Psoas muscle (tissue), 8 donors: ENCODE measurements at regions of chr2 and their contacts with region 1.

Region 1: GRCh38 chr2:70616168-70616694 is 62.6 kb upstream of the TGFA start:
- DNase-seq: no peak
- ATAC-seq: no peak
- H3K4me3 ChIP-seq: no peak overlapping the region
- H3K27ac ChIP-seq: no peak overlapping the region
- H3K4me1 ChIP-seq: no peaks in the 10 kb centered on the region
- H3K27me3 ChIP-seq: peaks cover 0 to 9% (median 0%) of the 10 kb centered on the region in 3 donors
- CTCF ChIP-seq: no peak

Region 2: GRCh38 chr2:70301344-70302194 is 314.7 kb before region 1 on chr2 and contains the start of gene FAM136A:
- intact Hi-C with region 1: loop called (anchors 1 to 5 kb)
- DNase-seq: peak; percentile 89 to 93
- ATAC-seq: peak; percentile 95 to 98 (median 98)
- H3K4me3 ChIP-seq: peak within 1 kb of the TSS; percentile 100
- H3K27ac ChIP-seq: peak within 1 kb of the TSS; percentile 88
- H3K4me1 ChIP-seq: peaks cover 7% of the 10 kb centered on the region
- H3K27me3 ChIP-seq: no peaks in the 10 kb centered on the region
- CTCF ChIP-seq: peak; percentile 96
- total RNA-seq, gene FAM136A: 14.1 to 28.0 (median 19.2) TPM

Region 3: DNA sequence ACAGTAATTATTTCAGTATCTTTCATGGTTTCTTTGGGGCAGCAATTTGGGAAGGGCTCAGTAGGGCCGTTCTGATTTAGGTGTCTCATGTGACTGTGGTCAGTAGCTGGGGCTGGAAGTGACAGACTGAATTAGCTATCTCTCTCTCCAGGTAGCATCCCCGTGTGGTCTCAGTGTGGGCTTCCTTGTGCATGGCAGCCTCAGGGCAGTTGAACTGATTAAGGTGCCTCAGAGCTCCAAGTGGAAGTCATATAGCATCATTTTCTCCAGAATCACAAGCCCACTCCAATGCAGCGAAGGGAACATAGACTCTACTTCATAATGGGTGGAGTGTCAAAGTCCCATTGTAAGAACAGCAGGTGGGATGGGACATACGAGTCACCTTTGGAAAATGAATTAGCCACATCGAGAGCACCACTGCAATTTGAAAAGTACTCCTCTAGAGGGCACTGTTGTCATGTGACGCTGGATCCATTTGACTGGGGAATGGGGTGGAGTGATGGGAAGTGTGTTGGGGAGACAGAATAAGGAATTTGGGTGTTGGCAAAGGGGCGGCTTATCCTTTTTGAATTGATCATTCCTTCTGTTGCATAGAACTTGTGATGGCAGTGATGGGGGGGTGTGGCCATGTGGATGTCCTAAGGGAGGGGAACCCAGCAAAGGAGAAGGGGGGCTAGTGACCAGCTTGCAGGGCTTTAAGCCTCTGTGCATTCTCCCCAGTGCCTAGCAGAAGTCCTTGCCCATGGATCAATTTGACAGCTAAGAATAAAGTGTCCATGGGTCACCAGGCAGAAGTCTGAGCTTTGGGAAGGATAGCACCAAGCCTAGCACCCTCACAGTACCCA is 275.1 kb before region 1 on chr2:
- intact Hi-C with region 1: loop called (anchors 2 kb)
- DNase-seq: no peak
- ATAC-seq: peak in 2 of 4 donors; percentile 50 to 60
- H3K4me3 ChIP-seq: no peak overlapping the region
- H3K27ac ChIP-seq: no peak overlapping the region
- H3K4me1 ChIP-seq: no peaks in the 10 kb centered on the region
- H3K27me3 ChIP-seq: peaks cover 0 to 7% (median 0%) of the 10 kb centered on the region in 3 donors
- CTCF ChIP-seq: peak; percentile 55